Activated naive CD4-positive, alpha-beta T cell treated with anti-CD3 and anti-CD28 coated beads for 36 hours (primary cell): ENCODE measurements at regions of chr3 and their contacts with region 1.

Region 1: GRCh38 chr3:122679085-122679881 is 1.4 kb upstream of the PARP14 start:
- DNase-seq: peak; percentile 91
- H3K4me3 Mint-ChIP-seq: peak overlapping the region; percentile 83
- H3K27ac Mint-ChIP-seq: peak overlapping the region; percentile 96
- H3K4me1 Mint-ChIP-seq: peaks cover 47% of the 10 kb centered on the region
- H3K27me3 Mint-ChIP-seq: no peaks in the 10 kb centered on the region

Region 2: GRCh38 chr3:122101646-122102045 is 577.6 kb before region 1 on chr3:
- CTCF ChIA-PET with region 1: no interaction called
- intact Hi-C with region 1: loop called (anchors 2 kb)
- DNase-seq: peak; percentile 18
- H3K4me3 Mint-ChIP-seq: peak overlapping the region; percentile 5
- H3K27ac Mint-ChIP-seq: peak overlapping the region; percentile 60
- H3K4me1 Mint-ChIP-seq: peaks cover 39% of the 10 kb centered on the region
- H3K27me3 Mint-ChIP-seq: no peaks in the 10 kb centered on the region

Region 3: GRCh38 chr3:122315619-122316018 is 363.7 kb before region 1 on chr3:
- CTCF ChIA-PET with region 1: no interaction called
- intact Hi-C with region 1: no loop called
- DNase-seq: no peak
- H3K4me3 Mint-ChIP-seq: no peak overlapping the region
- H3K27ac Mint-ChIP-seq: no peak overlapping the region
- H3K4me1 Mint-ChIP-seq: peaks cover 8% of the 10 kb centered on the region
- H3K27me3 Mint-ChIP-seq: no peaks in the 10 kb centered on the region

Region 4: DNA sequence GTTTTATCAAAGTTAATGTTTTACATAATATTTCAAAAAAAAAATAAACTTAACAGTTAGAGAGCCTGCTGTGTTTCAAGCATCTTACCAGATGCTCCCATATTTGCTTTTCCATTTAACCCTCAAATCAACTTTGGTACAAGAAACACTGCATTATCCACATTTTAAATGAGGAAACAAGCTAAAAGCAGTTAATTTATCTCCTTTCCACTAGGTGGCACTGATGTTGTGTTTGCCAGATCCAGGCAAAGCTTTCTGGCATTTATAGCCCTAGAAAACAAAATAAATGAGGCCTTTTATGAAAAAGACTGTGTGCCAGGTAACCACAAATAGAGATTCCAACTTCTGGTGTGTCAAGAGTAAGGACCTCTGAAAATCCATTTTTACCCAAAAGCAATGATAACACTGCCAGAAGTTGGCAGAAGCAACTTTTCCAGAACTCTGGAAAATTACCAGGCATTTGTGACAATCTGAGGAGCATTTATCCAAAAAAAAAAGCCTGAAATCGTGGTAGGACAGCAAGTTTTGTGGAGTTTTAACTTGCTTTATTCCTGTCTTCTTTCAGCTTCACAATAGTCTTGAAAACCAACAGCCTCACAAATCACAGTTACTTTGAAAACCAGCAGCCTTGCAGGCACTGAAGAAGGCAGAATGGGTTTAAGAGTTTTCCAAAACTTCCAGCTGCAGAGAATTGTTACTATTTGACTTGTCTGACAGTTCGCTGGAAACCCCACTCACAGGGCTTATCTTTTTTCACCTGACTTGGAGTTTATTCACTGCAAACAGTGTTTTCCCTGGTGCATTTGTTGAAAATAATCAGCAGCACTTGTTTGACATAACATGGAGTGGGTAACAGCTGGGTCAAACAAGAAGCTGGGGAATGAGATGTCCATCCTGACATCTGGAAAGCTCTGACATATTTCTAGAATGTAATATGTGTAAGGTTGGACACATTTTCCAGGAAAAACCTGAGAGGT is 286.1 kb before region 1 on chr3:
- CTCF ChIA-PET with region 1: interaction called, 5 read pairs
- intact Hi-C with region 1: loop called (anchors 1 kb)
- DNase-seq: peak; percentile 34
- H3K4me3 Mint-ChIP-seq: no peak overlapping the region
- H3K27ac Mint-ChIP-seq: no peak overlapping the region
- H3K4me1 Mint-ChIP-seq: peaks cover 41% of the 10 kb centered on the region
- H3K27me3 Mint-ChIP-seq: no peaks in the 10 kb centered on the region

Region 5: GRCh38 chr3:122514123-122515019 is 164.9 kb before region 1 on chr3 and contains the start of gene KPNA1:
- CTCF ChIA-PET with region 1: no interaction called
- intact Hi-C with region 1: loop called (anchors 1 kb)
- DNase-seq: peak; percentile 86
- H3K4me3 Mint-ChIP-seq: peak within 1 kb of the TSS; percentile 73
- H3K27ac Mint-ChIP-seq: peak within 1 kb of the TSS; percentile 77
- H3K4me1 Mint-ChIP-seq: peaks cover 42% of the 10 kb centered on the region
- H3K27me3 Mint-ChIP-seq: no peaks in the 10 kb centered on the region
- total RNA-seq, gene KPNA1: 45.6 to 45.8 TPM

Region 6: GRCh38 chr3:122609798-122610559 is 69.3 kb before region 1 on chr3:
- CTCF ChIA-PET with region 1: interaction called, 4 read pairs
- intact Hi-C with region 1: loop called (anchors 1 kb)
- DNase-seq: peak; percentile 51
- H3K4me3 Mint-ChIP-seq: peak overlapping the region; percentile 40
- H3K27ac Mint-ChIP-seq: peak overlapping the region; percentile 90
- H3K4me1 Mint-ChIP-seq: peaks cover 24% of the 10 kb centered on the region
- H3K27me3 Mint-ChIP-seq: no peaks in the 10 kb centered on the region

Region 7: DNA sequence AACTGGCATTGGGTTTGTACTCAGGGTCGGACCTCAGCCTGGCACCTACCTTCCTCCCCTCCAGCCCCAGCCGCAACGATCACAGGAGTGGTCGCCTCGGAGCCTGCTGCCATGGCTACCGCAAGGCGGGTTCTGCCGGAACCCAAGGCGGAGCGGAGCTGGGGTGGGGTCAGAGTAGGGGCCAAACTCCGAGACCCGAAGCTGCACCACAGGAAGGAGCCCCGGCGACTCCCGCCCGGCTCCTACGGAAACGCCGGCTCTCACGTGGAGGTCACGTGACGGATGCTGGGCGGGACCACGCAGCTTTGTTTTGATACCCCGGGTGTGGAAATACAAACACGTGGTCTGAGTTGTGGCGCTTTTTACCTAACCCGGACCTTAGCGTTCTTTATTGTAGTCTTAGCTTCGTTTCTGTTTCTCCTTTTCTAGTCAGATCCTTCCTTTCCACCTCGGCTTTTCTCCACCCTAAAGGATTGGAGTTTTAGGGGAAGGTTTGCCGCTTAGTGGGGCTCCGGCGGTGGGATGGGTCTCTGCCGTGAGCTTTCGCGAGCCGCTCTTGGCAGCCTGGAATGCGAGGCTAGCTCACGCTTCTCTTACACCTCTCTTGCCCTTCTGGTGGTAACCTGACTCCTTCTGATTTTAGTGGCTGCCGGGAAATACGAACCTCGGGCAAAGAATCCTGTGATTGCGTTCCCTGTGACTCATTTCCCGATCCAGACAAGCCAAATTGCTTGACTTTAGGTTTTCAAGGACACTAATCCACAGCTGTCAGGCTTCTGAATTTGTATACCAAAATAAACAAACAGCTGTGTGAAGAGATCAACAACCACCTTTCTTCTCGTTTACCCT is 114.5 kb after region 1 on chr3 and contains the start of gene HSPBAP1:
- CTCF ChIA-PET with region 1: no interaction called
- intact Hi-C with region 1: loop called (anchors 2 kb)
- DNase-seq: peak; percentile 92
- H3K4me3 Mint-ChIP-seq: peak within 1 kb of the TSS; percentile 86
- H3K27ac Mint-ChIP-seq: peak within 1 kb of the TSS; percentile 80
- H3K4me1 Mint-ChIP-seq: peaks cover 30% of the 10 kb centered on the region
- H3K27me3 Mint-ChIP-seq: no peaks in the 10 kb centered on the region
- total RNA-seq, gene HSPBAP1: 3.0 to 3.2 TPM